A673 (cell line): ENCODE measurements at regions of chr5 and their contacts with region 1.

Region 1: DNA sequence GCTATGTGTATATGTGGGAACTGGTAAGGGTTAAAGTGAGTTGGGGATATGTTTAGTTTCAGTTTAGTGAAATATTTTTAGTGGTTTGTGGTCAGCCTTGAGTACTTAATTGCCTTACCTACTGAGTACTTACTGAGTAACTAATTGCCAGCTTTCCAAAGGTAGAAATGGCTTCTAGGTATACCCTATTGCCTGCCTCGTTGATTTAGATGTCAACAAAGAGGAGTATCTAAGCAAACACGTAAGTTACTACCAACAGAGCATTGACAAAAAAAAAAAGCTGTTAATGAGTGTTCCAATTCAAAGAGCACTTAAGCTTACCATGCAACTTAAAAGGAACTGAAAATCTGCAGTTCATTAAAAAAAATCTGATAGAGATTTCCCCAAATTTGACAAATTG is 8.8 kb downstream of the ATP10B start:
- DNase-seq: no peak
- H3K4me3 ChIP-seq: no peak overlapping the region
- H3K27ac ChIP-seq: no peak overlapping the region
- H3K4me1 ChIP-seq: no peaks in the 10 kb centered on the region
- H3K27me3 ChIP-seq: no peaks in the 10 kb centered on the region
- CTCF ChIP-seq: no peak

Region 2: DNA sequence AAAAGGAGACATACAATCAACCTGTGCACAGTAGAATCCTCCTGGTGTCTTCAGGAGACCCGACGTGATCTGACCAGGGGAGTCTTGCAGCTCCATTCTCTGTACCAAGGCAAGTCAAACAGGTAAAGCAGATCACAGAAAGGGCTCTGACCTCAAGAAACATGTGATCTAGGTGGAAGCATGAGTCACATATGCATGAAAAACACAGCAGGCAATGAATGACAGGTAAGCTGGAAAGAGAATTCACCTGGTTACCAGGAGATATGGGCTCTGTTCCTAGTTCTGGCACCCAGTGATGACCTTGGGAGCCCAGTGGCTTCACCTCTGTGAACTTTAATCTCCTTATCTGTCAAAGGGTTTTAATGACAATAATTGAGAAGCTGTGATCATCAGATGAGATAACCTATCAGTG is 633.3 kb before region 1 on chr5:
- CTCF ChIA-PET with region 1: no interaction called
- POLR2A ChIA-PET with region 1: no interaction called
- intact Hi-C with region 1: no loop called
- DNase-seq: no peak
- H3K4me3 ChIP-seq: no peak overlapping the region
- H3K27ac ChIP-seq: no peak overlapping the region
- H3K4me1 ChIP-seq: no peaks in the 10 kb centered on the region
- H3K27me3 ChIP-seq: no peaks in the 10 kb centered on the region
- CTCF ChIP-seq: no peak

Region 3: DNA sequence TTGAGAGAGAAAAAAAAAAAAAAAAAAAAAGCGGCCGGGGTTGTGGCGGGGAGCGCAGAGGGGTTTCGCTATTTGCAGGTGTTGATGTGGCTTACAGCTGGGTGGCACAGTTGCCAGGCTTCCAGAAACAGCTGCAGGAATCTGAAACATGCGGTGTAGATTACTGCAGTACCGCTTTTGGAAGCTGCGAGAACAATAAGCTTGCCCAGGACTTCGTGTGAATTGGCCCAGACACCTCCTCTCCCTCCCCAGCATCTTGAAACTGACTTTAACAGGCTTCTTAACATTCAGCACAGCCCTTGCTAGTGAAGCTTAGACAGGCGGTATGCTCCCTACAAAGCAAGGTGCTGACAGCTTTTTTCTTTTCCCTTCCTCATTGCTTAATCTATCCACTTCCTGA is 95.3 kb before region 1 on chr5:
- CTCF ChIA-PET with region 1: no interaction called
- POLR2A ChIA-PET with region 1: no interaction called
- intact Hi-C with region 1: no loop called
- DNase-seq: no peak
- H3K4me3 ChIP-seq: no peak overlapping the region
- H3K27ac ChIP-seq: no peak overlapping the region
- H3K4me1 ChIP-seq: no peaks in the 10 kb centered on the region
- H3K27me3 ChIP-seq: no peaks in the 10 kb centered on the region
- CTCF ChIP-seq: no peak

Region 4: DNA sequence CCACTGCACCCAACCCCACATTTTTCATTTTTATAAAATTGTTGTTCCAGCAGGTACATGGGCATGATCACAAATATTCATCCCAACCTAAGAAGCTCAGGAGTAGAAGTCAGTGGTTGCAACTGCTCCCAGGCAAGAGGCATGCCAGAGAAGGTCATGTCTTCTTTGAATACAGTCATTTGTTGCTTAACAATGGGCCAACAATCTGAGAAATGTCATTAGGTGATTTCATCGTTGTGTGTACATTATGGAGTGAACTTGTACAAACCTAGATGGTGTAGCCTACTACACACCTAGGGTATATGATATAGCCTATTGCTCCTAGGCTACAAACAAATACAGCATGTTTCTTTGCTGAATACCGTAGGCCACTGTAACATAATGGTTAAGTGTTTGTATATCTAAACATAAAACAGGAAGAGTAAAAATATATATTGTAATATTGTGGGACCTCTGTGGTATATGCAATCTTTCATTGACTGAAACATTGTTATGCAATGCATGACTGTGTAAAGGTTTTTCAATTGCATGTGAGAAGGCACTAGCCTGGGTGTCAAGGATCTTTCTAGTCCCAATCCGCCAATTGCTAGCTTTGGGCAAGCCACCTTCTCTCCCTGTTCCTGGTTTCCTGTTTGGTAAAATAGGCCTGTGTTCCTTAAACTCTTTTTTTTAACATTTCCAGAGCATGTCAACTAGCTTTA is 18.8 kb before region 1 on chr5:
- CTCF ChIA-PET with region 1: no interaction called
- POLR2A ChIA-PET with region 1: no interaction called
- intact Hi-C with region 1: loop called (anchors 2 kb)
- DNase-seq: no peak
- H3K4me3 ChIP-seq: no peak overlapping the region
- H3K27ac ChIP-seq: no peak overlapping the region
- H3K4me1 ChIP-seq: no peaks in the 10 kb centered on the region
- H3K27me3 ChIP-seq: no peaks in the 10 kb centered on the region
- CTCF ChIP-seq: no peak